ENCODE measurements at regions of chr10 and their contacts with region 1.

Region 1: GRCh38 chr10:11270135-11270857 is 252.6 kb downstream of the CELF2 start:
- DNase-seq: peak; percentile 85
- H3K4me3 Mint-ChIP-seq: no peak overlapping the region
- H3K27ac Mint-ChIP-seq: peak overlapping the region; percentile 52
- H3K4me1 Mint-ChIP-seq: peaks cover 77% of the 10 kb centered on the region
- H3K27me3 Mint-ChIP-seq: no peaks in the 10 kb centered on the region

Region 2: DNA sequence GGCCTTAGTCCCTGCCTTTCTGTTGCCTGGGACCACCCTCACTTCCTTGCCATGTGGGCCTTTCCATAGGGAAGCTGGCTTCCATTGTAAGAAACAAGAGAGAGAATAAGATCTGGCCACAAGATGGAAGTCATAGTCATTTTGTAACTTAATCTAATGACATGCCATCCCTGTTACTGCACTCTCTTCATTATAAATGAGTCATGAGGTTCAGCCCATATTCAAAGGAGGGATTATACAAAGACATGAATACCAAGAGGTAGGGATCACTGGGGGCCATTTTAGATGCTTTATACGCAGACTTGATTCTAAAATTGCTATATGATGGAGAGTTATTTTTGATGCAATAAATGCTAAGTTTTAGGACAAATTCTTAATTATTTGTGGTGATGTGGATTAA is 327.9 kb before region 1 on chr10:
- CTCF ChIA-PET with region 1: no interaction called
- intact Hi-C with region 1: no loop called
- DNase-seq: no peak
- H3K4me3 Mint-ChIP-seq: no peak overlapping the region
- H3K27ac Mint-ChIP-seq: no peak overlapping the region
- H3K4me1 Mint-ChIP-seq: no peaks in the 10 kb centered on the region
- H3K27me3 Mint-ChIP-seq: peaks cover 5% of the 10 kb centered on the region

Region 3: DNA sequence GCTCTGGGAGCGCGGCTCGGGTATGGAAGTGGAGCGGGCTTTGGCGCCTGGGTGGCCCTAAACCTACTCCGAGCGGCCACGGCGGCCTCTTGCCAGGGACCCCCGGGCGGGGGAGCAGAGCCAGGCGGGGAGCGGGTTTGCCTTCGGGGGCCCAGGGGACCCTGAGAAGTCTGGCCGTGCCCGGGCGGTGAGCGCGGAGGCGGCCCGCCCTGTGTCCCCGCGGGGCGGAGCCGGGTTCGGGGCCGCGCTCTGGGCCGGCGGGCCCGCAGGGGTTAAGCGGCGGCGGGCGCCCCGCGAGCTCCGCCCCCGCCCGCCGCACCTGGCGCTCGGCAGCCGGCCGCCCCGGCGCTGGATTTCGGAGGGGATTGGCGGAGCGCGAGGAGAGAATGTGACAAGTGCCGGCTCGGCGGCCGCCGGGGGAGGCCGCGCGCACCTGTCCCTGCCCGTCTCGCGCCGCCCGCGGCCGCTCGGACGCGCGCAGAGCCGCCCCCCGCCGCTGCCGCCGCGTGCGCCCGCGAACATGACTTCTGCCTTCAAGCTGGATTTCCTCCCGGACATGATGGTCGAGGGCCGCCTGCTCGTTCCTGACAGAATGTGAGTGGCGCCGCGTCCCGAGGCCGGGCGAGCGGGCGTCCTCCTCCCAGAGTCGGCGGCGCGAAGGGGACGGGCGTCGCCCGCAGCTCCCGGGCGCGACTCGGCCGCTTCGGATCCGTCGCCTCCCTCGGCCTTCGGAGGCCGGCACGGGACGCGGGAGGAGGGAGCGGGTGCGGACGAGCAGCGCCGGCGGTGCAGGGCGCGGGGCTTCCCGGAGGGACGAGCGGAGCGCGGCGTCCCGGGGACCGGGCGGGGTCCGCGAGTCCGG is 252.5 kb before region 1 on chr10 and contains the start of gene CELF2:
- CTCF ChIA-PET with region 1: no interaction called
- intact Hi-C with region 1: loop called (anchors 1 kb)
- DNase-seq: peak; percentile 64
- H3K4me3 Mint-ChIP-seq: peak within 1 kb of the TSS; percentile 70
- H3K27ac Mint-ChIP-seq: no peak within 1 kb of the TSS
- H3K4me1 Mint-ChIP-seq: peaks cover 9% of the 10 kb centered on the region
- H3K27me3 Mint-ChIP-seq: peaks cover 69% of the 10 kb centered on the region
- total RNA-seq, gene CELF2: 68.2 to 72.2 TPM

Region 4: GRCh38 chr10:11113156-11113555 is 157.1 kb before region 1 on chr10:
- CTCF ChIA-PET with region 1: interaction called, 32 read pairs
- intact Hi-C with region 1: loop called (anchors 1 kb)
- DNase-seq: peak; percentile 41
- H3K4me3 Mint-ChIP-seq: no peak overlapping the region
- H3K27ac Mint-ChIP-seq: no peak overlapping the region
- H3K4me1 Mint-ChIP-seq: peaks cover 21% of the 10 kb centered on the region
- H3K27me3 Mint-ChIP-seq: no peaks in the 10 kb centered on the region

Region 5: DNA sequence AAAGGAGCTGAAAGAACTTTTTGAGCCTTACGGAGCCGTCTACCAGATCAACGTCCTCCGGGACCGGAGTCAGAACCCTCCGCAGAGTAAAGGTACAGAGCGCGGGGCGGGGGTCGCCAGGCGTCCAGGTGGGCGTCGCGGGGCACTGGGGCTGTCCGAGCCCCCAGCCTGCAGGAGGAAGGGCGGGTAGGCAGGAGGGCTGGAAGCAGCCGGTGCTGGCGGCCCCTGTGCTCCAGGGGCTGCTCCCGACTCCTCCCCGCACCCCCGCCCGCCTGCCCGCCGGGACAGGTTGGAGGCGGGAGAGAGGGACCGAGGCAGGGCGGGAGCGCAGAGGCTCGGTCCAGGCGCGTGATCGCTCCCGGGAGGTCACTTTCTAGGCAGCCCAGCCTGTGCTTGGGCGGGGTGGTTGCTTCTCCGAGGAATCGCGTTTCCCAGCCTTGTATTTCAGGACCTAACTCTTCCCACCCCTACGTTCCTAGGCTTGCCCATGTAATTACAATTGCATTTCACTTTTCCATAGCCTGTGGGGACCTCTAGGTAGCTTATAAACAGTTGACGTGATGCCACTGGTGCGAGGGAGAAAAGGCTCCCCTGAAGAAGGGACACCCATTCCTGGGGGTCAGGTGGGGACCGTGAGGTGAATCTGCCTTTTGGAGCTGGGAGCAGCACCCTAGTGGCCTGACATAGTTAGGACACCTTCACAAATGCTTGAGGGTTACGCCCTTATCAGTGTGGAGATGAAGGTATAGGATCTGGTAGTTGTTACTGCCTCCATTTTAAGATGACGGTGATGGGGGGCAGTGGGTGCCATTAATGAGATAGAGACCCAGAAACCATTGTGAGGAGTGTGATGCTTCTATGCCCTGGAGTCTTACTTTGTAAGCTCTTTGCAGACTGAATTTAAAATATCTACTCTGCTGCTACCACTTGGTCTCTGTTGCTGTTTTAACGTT is 104.4 kb before region 1 on chr10:
- CTCF ChIA-PET with region 1: interaction called, 17 read pairs
- intact Hi-C with region 1: no loop called
- DNase-seq: peak; percentile 84
- H3K4me3 Mint-ChIP-seq: no peak overlapping the region
- H3K27ac Mint-ChIP-seq: no peak overlapping the region
- H3K4me1 Mint-ChIP-seq: peaks cover 26% of the 10 kb centered on the region
- H3K27me3 Mint-ChIP-seq: no peaks in the 10 kb centered on the region

Region 6: GRCh38 chr10:11189582-11190376 is 80.5 kb before region 1 on chr10:
- CTCF ChIA-PET with region 1: no interaction called
- intact Hi-C with region 1: no loop called
- DNase-seq: no peak
- H3K4me3 Mint-ChIP-seq: no peak overlapping the region
- H3K27ac Mint-ChIP-seq: peak overlapping the region; percentile 38
- H3K4me1 Mint-ChIP-seq: peaks cover 93% of the 10 kb centered on the region
- H3K27me3 Mint-ChIP-seq: no peaks in the 10 kb centered on the region

Region 7: DNA sequence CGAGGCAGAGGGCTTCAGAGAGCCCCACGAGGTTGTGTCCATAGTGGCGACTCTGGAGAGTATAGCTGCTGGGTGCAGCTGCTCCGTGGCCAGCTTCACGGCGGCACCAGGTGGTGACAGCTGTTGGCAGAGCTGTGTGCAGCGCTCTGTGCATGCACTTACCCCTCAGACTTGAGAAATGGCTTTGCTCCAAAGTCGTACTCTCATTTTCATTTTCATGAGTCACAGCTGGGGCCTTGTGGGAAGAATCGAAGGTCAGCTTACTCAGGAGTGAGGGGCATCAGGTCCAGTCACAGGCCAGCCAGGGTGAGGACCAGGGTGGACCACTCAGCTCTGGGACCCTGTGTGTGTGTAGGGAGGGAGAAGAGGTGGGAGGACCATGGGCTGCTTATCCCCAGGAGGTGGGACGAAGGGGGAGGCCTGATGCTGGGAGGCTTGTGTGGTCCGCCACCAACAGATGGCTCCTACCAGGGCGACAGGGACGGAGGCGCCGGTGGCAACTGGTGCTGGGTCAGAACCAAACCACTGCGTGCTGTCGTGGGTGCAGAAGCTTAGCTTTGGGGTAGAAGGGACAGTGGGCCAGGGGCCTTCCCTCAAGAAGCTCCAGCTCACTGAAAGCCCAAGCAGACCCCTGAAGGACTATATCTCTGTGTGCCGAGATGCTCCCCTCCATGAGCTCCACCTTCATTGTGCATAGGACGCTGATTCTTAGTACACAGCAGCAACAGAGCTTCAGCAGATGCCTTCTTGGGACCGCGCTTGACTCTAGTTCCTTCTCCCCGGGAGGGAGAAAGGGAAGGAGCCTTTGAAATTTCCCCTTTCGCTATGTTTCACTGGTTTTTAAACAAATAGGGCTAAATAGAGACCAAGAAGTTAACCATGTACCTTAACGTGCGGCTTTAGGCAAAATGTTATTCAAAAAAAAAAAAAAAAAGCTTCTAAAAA is 27.6 kb before region 1 on chr10:
- CTCF ChIA-PET with region 1: interaction called, 12 read pairs
- intact Hi-C with region 1: loop called (anchors 2 kb)
- DNase-seq: peak; percentile 51
- H3K4me3 Mint-ChIP-seq: peak overlapping the region; percentile 20
- H3K27ac Mint-ChIP-seq: peak overlapping the region; percentile 50
- H3K4me1 Mint-ChIP-seq: peaks cover 30% of the 10 kb centered on the region
- H3K27me3 Mint-ChIP-seq: no peaks in the 10 kb centered on the region

Region 8: GRCh38 chr10:11255796-11256444 is 14.4 kb before region 1 on chr10:
- CTCF ChIA-PET with region 1: interaction called, 11 read pairs
- intact Hi-C with region 1: no loop called
- DNase-seq: no peak
- H3K4me3 Mint-ChIP-seq: no peak overlapping the region
- H3K27ac Mint-ChIP-seq: peak overlapping the region; percentile 86
- H3K4me1 Mint-ChIP-seq: peaks cover 67% of the 10 kb centered on the region
- H3K27me3 Mint-ChIP-seq: no peaks in the 10 kb centered on the region

Region 9: DNA sequence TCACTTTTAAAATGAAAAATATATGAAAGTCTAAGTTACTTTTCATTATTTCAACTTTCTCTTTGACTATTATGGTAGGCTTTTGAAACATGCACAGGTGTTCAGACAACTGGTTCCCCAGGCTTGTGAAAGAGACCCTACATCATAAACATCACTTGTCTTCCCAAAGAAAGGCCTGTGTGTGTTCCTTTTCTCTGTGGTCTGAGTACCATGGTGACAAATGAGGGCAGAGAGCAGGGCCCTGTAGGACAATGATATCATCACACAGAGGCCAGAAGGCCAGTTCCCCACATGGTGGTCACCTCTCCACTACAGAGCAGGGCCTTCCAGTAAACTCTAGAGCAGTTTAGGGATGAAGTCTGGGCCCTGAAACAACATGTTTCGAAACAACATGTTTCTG is 52.4 kb after region 1 on chr10:
- CTCF ChIA-PET with region 1: no interaction called
- intact Hi-C with region 1: loop called (anchors 1 kb)
- DNase-seq: no peak
- H3K4me3 Mint-ChIP-seq: no peak overlapping the region
- H3K27ac Mint-ChIP-seq: peak overlapping the region; percentile 95
- H3K4me1 Mint-ChIP-seq: peaks cover 75% of the 10 kb centered on the region
- H3K27me3 Mint-ChIP-seq: no peaks in the 10 kb centered on the region

Region 10: DNA sequence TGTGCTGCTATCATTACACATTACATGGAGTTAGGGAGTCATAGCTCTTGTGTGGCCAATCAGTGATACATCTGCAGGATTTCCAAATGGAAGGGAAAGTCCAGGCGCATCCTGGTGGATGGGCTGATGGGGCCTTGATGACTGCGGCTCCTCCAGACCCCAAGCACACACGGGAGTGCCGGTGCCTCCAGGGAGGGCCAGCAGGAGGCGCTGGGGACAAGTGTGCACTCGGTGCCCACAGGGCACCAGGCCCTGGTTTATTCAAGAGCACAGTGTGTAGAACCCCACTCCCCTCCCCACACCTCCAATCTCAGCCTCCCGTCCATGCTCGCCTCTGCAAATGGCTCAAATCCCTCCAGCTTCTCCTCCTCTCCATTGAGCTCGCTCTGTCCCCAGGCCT is 97.2 kb after region 1 on chr10:
- CTCF ChIA-PET with region 1: no interaction called
- intact Hi-C with region 1: no loop called
- DNase-seq: no peak
- H3K4me3 Mint-ChIP-seq: no peak overlapping the region
- H3K27ac Mint-ChIP-seq: no peak overlapping the region
- H3K4me1 Mint-ChIP-seq: peaks cover 8% of the 10 kb centered on the region
- H3K27me3 Mint-ChIP-seq: no peaks in the 10 kb centered on the region

Region 11: GRCh38 chr10:11440250-11441150 is 170.2 kb after region 1 on chr10:
- CTCF ChIA-PET with region 1: no interaction called
- intact Hi-C with region 1: no loop called
- DNase-seq: peak; percentile 74
- H3K4me3 Mint-ChIP-seq: peak overlapping the region; percentile 27
- H3K27ac Mint-ChIP-seq: peak overlapping the region; percentile 71
- H3K4me1 Mint-ChIP-seq: peaks cover 22% of the 10 kb centered on the region
- H3K27me3 Mint-ChIP-seq: no peaks in the 10 kb centered on the region

Measured in activated naive CD4-positive, alpha-beta T cell treated with anti-CD3 and anti-CD28 coated beads for 36 hours (primary cell).